Right cardiac atrium (tissue), 5 donors: ENCODE measurements at regions of chr6 and their contacts with region 1.

Region 1: DNA sequence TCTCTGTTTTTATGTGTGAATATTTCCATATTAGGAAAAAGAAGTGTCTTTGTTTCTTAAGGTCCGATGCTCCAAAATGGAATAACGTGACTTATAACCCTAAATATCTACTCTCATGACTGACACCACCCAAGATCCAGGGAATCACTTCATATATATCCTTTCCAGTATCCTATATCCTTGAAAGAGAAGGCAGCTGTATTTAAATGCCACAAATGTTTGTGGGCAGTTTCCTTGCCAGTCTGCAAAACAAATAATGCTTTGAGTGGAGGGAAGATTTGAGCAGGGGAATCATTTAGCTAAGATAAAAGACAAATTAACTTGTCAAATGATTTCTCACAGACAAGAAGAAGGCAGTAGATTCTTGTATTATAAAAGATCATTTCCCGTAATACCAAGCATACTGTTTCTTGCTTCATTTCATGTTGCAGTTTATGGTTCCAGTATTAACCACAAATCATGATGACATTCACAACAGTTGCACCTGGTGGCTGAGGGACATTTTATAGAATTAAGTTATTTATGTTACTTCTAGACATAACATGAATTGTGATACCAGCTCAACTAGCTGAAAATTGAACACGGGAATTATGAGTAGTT is 30.0 kb upstream of the FABP7 start:
- DNase-seq: no peak
- ATAC-seq: no peak
- H3K4me3 ChIP-seq: no peak overlapping the region
- H3K27ac ChIP-seq: no peak overlapping the region
- H3K4me1 ChIP-seq: no peaks in the 10 kb centered on the region
- H3K27me3 ChIP-seq: no peaks in the 10 kb centered on the region

Region 2: DNA sequence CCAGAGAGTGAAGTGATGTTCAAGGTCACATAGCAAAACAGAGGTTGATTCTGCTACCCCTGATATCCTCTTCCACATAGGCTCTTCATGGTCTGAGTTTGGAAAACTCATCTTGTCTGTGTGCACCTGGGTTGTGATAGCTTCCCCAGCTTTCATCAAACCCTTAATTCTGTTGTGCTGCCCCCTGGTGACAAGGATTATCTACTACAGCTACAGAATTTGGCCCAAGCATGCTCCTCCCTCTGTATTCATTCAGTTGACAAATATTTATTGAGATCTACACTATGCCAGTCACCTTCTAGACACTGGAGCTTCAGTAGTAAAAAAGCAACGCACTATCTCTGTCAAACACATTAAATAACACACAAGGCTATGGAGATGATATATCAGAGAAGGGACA is 89.9 kb after region 1 on chr6:
- intact Hi-C with region 1: loop called in 2 of 4 experiments (anchors 5 kb)
- DNase-seq: peak in 1 of 3 donors; percentile 11
- ATAC-seq: peak; percentile 33 to 59
- H3K4me3 ChIP-seq: no peak overlapping the region
- H3K27ac ChIP-seq: no peak overlapping the region
- H3K4me1 ChIP-seq: no peaks in the 10 kb centered on the region
- H3K27me3 ChIP-seq: no peaks in the 10 kb centered on the region